ENCODE measurements at regions of chr14 and their contacts with region 1.

Region 1: GRCh38 chr14:101809671-101810514 is 48.4 kb downstream of the PPP2R5C start:
- DNase-seq: peak; percentile 94 to 99
- H3K4me3 ChIP-seq: peak overlapping the region; percentile 62
- H3K27ac ChIP-seq: peak overlapping the region; percentile 92
- H3K4me1 ChIP-seq: peaks cover 28% of the 10 kb centered on the region
- H3K27me3 ChIP-seq: no peaks in the 10 kb centered on the region
- CTCF ChIP-seq: no peak

Region 2: GRCh38 chr14:101731187-101732080 is 78.5 kb before region 1 on chr14:
- CTCF ChIA-PET with region 1: interaction called, 3 read pairs
- POLR2A ChIA-PET with region 1: interaction called, 5 read pairs
- intact Hi-C with region 1: loop called (anchors 1 kb)
- DNase-seq: peak; percentile 98 to 100
- H3K4me3 ChIP-seq: peak overlapping the region; percentile 54
- H3K27ac ChIP-seq: peak overlapping the region; percentile 92
- H3K4me1 ChIP-seq: peaks cover 50% of the 10 kb centered on the region
- H3K27me3 ChIP-seq: no peaks in the 10 kb centered on the region
- CTCF ChIP-seq: no peak

Region 3: GRCh38 chr14:101791919-101792572 is 17.8 kb before region 1 on chr14:
- CTCF ChIA-PET with region 1: interaction called, 5 read pairs
- POLR2A ChIA-PET with region 1: no interaction called
- intact Hi-C with region 1: loop called (anchors 2 kb)
- DNase-seq: peak in 1 of 2 experiments; percentile 84
- H3K4me3 ChIP-seq: peak overlapping the region; percentile 22; the same call in 1 of the 2 replicates
- H3K27ac ChIP-seq: peak overlapping the region; percentile 24
- H3K4me1 ChIP-seq: peaks cover 11% of the 10 kb centered on the region
- H3K27me3 ChIP-seq: no peaks in the 10 kb centered on the region
- CTCF ChIP-seq: no peak

Region 4: GRCh38 chr14:101843665-101844064 is 33.8 kb after region 1 on chr14:
- CTCF ChIA-PET with region 1: no interaction called
- POLR2A ChIA-PET with region 1: interaction called, 17 read pairs
- intact Hi-C with region 1: no loop called
- DNase-seq: peak in 1 of 2 experiments; percentile 17
- H3K4me3 ChIP-seq: no peak overlapping the region
- H3K27ac ChIP-seq: no peak overlapping the region
- H3K4me1 ChIP-seq: no peaks in the 10 kb centered on the region
- H3K27me3 ChIP-seq: no peaks in the 10 kb centered on the region
- CTCF ChIP-seq: peak; percentile 66

Region 5: GRCh38 chr14:101947906-101948665 is 138.2 kb after region 1 on chr14:
- CTCF ChIA-PET with region 1: no interaction called
- POLR2A ChIA-PET with region 1: interaction called, 9 read pairs
- intact Hi-C with region 1: loop called (anchors 5 kb)
- DNase-seq: peak; percentile 100
- H3K4me3 ChIP-seq: peak overlapping the region; percentile 83
- H3K27ac ChIP-seq: peak overlapping the region; percentile 93
- H3K4me1 ChIP-seq: peaks cover 20% of the 10 kb centered on the region
- H3K27me3 ChIP-seq: no peaks in the 10 kb centered on the region
- CTCF ChIP-seq: no peak

Region 6: DNA sequence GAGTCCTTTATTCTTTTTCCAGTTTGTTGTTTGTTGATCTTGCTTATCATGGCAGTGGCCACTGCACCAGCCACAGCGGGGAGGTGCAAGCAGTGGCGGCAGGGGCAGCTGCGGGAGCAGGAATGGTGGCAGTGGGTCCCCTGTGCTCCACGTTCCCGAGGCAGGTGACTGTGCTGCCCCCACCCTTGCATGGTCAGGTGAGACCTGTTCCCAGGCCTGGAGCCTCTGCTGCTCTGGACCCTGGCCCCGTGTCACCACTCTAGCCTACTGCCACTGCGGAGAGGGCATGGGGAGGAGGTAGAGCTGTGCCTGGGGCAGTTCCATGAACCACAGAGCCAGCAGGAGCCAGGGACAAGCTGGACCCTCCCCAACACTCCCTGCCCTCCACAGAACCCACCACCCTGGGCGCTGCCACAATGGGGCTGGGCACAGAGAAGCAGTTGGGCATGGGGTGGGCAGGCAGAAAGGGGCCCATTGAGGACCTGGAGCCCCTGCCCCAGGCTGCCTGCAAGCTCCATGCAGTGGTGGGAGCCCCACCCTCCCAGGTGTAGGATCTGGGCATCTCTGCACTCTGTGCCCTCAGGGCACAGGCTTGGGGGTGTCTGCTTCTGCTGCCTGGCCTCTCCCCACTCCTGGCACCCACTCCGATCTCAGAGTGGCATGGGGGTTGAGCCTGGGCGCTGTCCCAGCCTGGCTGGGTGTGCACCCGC is 306.6 kb after region 1 on chr14:
- CTCF ChIA-PET with region 1: no interaction called
- POLR2A ChIA-PET with region 1: no interaction called
- intact Hi-C with region 1: no loop called
- DNase-seq: no peak
- H3K4me3 ChIP-seq: no peak overlapping the region
- H3K27ac ChIP-seq: no peak overlapping the region
- H3K4me1 ChIP-seq: no peaks in the 10 kb centered on the region
- H3K27me3 ChIP-seq: no peaks in the 10 kb centered on the region
- CTCF ChIP-seq: no peak